Transverse colon (tissue), 4 donors: ENCODE measurements at regions of chr18 and their contacts with region 1.

Region 1: DNA sequence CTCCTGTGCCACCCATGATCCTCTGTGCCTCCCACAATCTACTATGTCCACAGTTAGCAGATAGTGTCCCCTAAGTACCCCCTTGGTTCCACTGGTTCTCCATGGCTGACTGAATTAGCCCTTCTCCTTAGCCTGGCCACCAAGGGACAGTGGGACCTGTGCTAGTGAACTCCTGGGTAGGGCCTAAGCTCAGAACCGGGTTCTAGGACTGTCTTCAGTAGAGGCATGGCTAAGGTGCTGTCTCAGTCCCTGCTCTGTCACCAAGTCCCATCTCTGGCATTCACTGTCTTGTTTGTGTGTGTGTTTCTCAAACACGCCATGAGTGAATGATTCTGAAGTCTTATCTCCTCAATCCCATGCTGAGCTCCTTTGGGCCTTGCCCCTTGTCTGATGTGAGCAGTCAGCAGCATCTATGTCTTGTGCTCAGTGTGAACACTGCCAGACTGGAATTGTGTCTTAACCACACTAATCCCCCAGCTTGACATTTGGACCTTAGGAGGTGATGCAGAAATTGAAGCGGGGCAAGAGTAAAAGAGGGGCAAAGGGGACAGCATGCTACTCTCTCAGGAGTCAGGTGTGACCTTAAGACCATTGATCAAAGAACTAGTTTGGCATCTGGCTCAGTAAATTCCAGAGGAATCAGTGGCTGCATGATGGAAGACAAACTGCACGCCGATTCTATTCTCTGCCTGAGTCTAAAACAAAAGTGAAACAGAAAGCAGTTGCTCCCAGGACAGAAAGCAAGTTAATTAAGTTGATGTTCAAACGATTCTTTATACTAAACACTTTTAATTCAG is 190.5 kb downstream of the ALPK2 start:
- DNase-seq: no peak
- H3K4me3 ChIP-seq: peak overlapping the region in 3 of 4 donors; percentile 10 to 32 (median 12)
- H3K27ac ChIP-seq: no peak overlapping the region
- H3K4me1 ChIP-seq: peaks cover 0 to 9% (median 3%) of the 10 kb centered on the region in 4 donors
- H3K27me3 ChIP-seq: no peaks in the 10 kb centered on the region
- CTCF ChIP-seq: no peak
- EP300 ChIP-seq: no peak
- POLR2A ChIP-seq: no peak

Region 2: DNA sequence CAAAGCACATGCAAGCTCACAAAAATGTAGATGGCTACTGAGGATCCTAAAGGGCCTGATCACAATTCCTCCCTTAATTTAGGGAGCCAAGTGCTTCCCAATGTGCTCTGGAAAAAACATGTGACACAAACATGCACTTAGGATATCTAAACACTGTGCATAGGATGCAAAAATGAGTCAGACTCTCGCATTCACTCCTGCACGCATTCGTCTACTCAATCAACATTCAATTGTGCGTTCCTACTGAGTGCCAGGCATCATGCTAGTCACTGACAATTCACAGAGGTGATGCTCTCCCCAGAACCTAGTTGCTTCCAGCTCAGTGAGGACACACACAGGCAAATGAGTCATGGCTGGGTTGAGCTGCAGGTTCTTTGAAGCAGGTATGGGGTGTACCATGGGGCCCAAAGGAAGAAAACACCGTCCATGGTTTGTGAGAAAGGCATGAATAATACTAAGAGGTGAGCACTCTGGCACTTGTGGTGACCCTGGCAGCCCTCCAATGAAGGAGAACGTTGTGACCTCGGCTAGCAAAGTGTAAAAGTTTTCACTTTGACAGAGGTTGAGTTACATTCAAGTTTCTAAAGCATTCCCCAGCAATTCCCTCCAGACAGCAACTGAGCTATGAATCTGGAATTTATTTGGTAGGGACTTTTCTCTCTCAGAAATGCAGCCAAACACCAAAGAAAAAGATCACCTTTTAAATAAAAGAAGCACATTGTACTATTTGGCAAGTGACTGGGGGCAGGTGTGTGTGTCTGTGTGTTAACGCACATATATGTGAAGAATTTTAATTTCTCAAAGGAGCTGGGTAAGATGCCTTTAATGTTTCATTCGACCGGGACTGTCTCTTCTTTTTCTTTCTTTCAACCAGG is 17.2 kb after region 1 on chr18:
- in situ Hi-C with region 1: no loop called
- intact Hi-C with region 1: no loop called
- DNase-seq: no peak
- H3K4me3 ChIP-seq: no peak overlapping the region
- H3K27ac ChIP-seq: peak overlapping the region; percentile 44 to 58 (median 50)
- H3K4me1 ChIP-seq: peaks cover 0 to 29% (median 12%) of the 10 kb centered on the region in 4 donors
- H3K27me3 ChIP-seq: no peaks in the 10 kb centered on the region
- CTCF ChIP-seq: no peak
- EP300 ChIP-seq: no peak
- POLR2A ChIP-seq: no peak

Region 3: GRCh38 chr18:58466636-58467205 is 28.4 kb after region 1 on chr18:
- in situ Hi-C with region 1: no loop called
- intact Hi-C with region 1: loop called (anchors 2 kb)
- DNase-seq: peak; percentile 58
- H3K4me3 ChIP-seq: no peak overlapping the region
- H3K27ac ChIP-seq: no peak overlapping the region
- H3K4me1 ChIP-seq: no peaks in the 10 kb centered on the region
- H3K27me3 ChIP-seq: no peaks in the 10 kb centered on the region
- CTCF ChIP-seq: no peak
- EP300 ChIP-seq: no peak
- POLR2A ChIP-seq: no peak